ENCODE measurements at regions of chr1 and their contacts with region 1.

Region 1: DNA sequence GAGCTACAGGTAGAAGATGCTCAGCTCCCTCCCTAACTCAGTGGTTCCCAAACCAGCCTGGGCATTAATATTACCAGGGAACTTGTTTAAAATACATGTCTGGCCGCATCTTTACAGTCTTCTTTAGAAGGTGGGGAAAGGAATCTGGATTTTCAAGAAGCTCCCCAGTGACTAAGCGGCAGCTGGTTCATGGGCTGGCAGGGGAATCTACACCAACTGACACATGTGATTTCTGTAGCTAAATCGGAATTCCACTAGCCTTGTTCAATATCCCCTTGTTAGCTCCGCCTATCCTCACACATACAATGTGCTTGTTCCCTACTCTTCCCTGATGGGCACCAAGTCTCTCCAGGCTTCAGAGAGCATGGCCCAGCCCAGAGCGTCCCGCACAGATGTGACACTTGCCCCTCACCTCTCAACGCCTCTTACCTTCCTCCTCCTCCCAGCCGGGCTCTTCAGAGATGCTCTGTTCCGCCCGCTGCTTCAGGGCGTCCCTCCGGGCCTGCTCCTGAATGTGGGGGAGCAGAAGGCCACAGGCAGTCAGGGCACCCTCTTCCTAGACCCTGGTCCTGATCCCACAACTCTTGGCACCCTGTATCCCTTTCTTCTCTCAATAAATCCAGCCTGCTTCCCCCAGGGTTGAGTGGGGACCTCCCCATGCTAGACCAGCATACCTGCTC is 15.3 kb downstream of the TSSK3 start:
- DNase-seq: no peak
- H3K4me3 ChIP-seq: no peak overlapping the region
- H3K27ac ChIP-seq: no peak overlapping the region
- H3K4me1 ChIP-seq: no peaks in the 10 kb centered on the region
- H3K27me3 ChIP-seq: no peaks in the 10 kb centered on the region
- CTCF ChIP-seq: no peak
- POLR2A ChIP-seq: no peak

Region 2: DNA sequence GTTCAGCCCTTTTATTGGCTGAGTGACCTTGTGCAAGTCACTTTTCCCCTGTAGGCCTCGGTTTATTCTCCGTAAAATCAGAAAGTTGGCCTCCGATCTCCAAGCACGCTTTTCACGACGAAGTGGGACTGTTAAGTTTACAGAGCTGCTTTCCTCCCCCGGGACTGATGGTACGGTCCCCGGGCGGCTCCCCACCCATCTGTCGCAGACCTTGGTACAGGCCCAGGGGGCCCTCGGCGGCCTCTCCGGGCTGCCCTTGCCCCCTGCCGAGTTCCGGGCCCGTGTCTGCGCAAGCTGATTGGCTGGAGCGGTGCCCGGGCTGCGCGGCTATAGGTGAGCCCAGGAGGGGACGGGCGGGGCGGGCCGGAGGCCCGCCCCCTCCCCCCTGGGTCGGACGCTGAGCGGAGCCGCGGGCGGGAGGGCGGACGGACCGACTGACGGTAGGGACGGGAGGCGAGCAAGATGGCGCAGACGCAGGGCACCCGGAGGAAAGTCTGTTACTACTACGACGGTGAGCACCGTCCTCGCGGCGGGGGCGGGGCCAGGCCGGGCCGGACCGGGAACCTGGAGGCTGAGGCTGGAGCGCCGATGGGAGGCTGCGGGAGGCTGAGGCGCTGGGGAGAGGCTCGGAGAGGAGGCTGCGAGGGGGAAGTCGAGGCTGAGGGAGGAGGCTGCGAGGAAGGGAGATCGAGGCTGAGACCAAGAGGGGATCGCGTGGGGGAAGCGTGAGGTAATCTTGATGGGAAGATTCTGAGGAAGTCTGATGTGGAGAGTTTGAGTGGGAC is 85.8 kb before region 1 on chr1 and contains the start of gene HDAC1:
- intact Hi-C with region 1: no loop called
- DNase-seq: no peak
- H3K4me3 ChIP-seq: peak within 1 kb of the TSS; percentile 82 to 95
- H3K27ac ChIP-seq: peak within 1 kb of the TSS; percentile 91
- H3K4me1 ChIP-seq: peaks cover 37% of the 10 kb centered on the region
- H3K27me3 ChIP-seq: no peaks in the 10 kb centered on the region
- CTCF ChIP-seq: no peak
- POLR2A ChIP-seq: peak in 1 of 2 donors; percentile 46
- total RNA-seq, gene HDAC1: 65.6 TPM

Region 3: GRCh38 chr1:32448773-32449456 is 71.2 kb after region 1 on chr1:
- intact Hi-C with region 1: loop called (anchors 2 kb)
- DNase-seq: no peak
- H3K4me3 ChIP-seq: no peak overlapping the region
- H3K27ac ChIP-seq: no peak overlapping the region
- H3K4me1 ChIP-seq: no peaks in the 10 kb centered on the region
- H3K27me3 ChIP-seq: no peaks in the 10 kb centered on the region
- CTCF ChIP-seq: no peak
- POLR2A ChIP-seq: no peak